Common myeloid progenitor, CD34-positive (primary cell): ENCODE measurements at regions of chr14 and their contacts with region 1.

Region 1: DNA sequence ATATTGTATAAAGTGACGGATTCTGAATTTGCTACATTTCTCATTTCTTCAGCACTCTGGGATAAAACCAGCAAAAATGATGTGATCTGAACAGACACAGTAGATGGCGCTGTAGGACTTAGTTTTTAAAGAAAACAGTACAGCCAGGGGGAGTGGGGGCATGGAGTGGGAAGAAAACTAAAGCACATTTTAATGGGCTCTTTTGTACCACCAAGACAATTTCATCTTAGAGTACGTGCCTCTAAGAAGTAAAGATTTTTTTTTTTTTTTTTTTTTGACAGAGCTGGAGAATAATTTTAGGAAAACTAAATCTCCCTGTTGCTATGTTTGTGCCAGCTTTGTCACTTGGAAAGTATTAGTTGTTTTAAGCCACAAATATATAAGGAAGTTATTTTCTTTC is 124.4 kb downstream of the RAD51B start:
- DNase-seq: peak; percentile 90 to 94 (median 94)
- H3K4me3 ChIP-seq: no peak overlapping the region
- H3K27ac ChIP-seq: no peak overlapping the region
- H3K4me1 ChIP-seq: peaks cover 6 to 22% (median 7%) of the 10 kb centered on the region in 4 experiments
- H3K27me3 ChIP-seq: no peaks in the 10 kb centered on the region

Region 2: DNA sequence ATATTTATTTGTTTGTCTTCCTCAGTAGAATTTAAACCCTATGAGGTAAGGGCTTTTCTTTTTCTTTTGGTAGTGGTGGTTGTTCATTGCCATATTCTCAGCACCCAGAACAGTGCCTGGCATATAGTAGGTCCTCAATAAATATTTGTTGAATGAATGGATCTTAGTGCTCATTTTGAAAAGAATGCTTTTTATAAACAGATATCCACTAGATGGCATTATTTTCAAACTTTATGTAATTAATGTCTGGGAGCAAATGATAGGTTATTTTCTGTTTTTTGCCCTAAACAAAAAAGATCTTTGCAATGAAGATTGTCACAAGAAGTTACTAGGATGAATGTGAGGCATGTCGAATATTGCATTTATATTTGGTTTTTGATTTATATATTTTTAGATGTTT is 60.2 kb before region 1 on chr14:
- CTCF ChIA-PET with region 1: interaction called, 10 read pairs
- POLR2A ChIA-PET with region 1: no interaction called
- DNase-seq: peak; percentile 29 to 47 (median 42)
- H3K4me3 ChIP-seq: no peak overlapping the region
- H3K27ac ChIP-seq: no peak overlapping the region
- H3K4me1 ChIP-seq: peaks cover 11 to 33% (median 19%) of the 10 kb centered on the region in 4 experiments
- H3K27me3 ChIP-seq: no peaks in the 10 kb centered on the region